ENCODE measurements at regions of chr9 and their contacts with region 1.

Region 1: GRCh38 chr9:35646533-35647265 is 4.0 kb downstream of the SIT1 start:
- DNase-seq: peak; percentile 61 to 88
- H3K4me3 ChIP-seq: peak overlapping the region; percentile 71
- H3K27ac ChIP-seq: peak overlapping the region; percentile 66
- H3K4me1 ChIP-seq: peaks cover 5% of the 10 kb centered on the region; the same call in 1 of the 2 replicates
- H3K27me3 ChIP-seq: no peaks in the 10 kb centered on the region
- CTCF ChIP-seq: peak; percentile 73

Region 2: DNA sequence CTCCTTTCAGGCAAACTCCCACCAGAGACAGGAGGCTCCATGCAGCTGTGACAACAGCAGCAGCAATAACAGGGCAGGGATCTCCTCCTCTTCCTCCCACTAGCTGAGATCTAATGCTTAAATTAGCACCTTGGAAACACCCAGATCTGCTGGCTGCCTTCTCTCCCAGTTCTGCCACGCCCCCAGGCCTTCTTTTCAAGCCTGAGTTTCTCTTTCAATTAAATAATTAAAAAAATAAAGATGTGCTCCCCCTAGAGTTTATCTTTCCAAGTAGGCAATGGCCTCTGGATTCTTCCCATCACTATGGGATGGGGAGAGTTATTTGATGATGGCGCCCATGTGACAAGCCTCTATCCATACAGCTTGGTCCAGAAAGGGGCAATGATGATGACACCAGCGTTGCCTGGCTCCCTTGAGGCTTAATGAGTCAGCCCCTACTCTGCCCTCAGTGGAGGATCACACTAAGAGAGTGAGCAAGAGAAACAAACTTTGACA is 1192.1 kb before region 1 on chr9:
- CTCF ChIA-PET with region 1: no interaction called
- POLR2A ChIA-PET with region 1: interaction called, 11 read pairs
- intact Hi-C with region 1: no loop called
- DNase-seq: peak; percentile 31 to 46
- H3K4me3 ChIP-seq: no peak overlapping the region
- H3K27ac ChIP-seq: no peak overlapping the region
- H3K4me1 ChIP-seq: peaks cover 26% of the 10 kb centered on the region
- H3K27me3 ChIP-seq: no peaks in the 10 kb centered on the region
- CTCF ChIP-seq: peak; percentile 25; the same call in 1 of the 2 replicates

Region 3: GRCh38 chr9:35481347-35481975 is 165.2 kb before region 1 on chr9:
- CTCF ChIA-PET with region 1: no interaction called
- POLR2A ChIA-PET with region 1: no interaction called
- intact Hi-C with region 1: loop called (anchors 5 kb)
- DNase-seq: peak; percentile 50 to 57
- H3K4me3 ChIP-seq: no peak overlapping the region
- H3K27ac ChIP-seq: no peak overlapping the region
- H3K4me1 ChIP-seq: no peaks in the 10 kb centered on the region
- H3K27me3 ChIP-seq: no peaks in the 10 kb centered on the region
- CTCF ChIP-seq: peak; percentile 74

Region 4: DNA sequence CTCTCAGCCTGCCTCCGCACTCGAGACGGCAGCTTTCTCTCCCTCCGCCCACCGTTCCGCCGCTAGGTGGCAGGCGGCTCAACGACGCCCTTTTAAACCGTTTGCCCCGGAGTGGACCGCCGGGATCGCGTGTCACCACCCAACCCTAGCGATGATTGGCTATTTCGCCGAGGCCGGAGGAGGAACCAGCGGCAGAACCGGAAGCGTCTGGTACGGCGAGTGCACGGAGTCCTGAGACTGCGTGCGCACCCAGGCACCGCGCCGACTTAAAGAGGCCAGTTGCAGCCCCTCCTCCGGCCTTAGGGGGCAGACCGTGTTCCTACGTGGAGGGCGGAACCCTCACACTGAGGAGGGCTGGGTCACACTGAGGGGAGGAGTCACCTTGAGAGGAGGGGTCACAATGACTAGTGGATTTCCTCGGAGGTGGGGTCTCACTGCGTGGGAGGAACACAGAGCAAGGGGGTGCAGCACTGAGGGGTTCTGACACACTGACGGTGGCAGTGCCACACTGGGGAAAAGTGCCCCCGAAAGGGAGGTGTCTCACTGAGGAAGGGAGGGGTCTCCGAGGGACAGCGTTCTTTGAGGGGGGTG is 42.6 kb before region 1 on chr9:
- CTCF ChIA-PET with region 1: no interaction called
- POLR2A ChIA-PET with region 1: interaction called, 3 read pairs
- intact Hi-C with region 1: loop called (anchors 2 kb)
- DNase-seq: peak; percentile 94 to 97
- H3K4me3 ChIP-seq: peak overlapping the region; percentile 75
- H3K27ac ChIP-seq: peak overlapping the region; percentile 71
- H3K4me1 ChIP-seq: peaks cover 14% of the 10 kb centered on the region; the same call in 1 of the 2 replicates
- H3K27me3 ChIP-seq: no peaks in the 10 kb centered on the region
- CTCF ChIP-seq: peak; percentile 80

Region 5: DNA sequence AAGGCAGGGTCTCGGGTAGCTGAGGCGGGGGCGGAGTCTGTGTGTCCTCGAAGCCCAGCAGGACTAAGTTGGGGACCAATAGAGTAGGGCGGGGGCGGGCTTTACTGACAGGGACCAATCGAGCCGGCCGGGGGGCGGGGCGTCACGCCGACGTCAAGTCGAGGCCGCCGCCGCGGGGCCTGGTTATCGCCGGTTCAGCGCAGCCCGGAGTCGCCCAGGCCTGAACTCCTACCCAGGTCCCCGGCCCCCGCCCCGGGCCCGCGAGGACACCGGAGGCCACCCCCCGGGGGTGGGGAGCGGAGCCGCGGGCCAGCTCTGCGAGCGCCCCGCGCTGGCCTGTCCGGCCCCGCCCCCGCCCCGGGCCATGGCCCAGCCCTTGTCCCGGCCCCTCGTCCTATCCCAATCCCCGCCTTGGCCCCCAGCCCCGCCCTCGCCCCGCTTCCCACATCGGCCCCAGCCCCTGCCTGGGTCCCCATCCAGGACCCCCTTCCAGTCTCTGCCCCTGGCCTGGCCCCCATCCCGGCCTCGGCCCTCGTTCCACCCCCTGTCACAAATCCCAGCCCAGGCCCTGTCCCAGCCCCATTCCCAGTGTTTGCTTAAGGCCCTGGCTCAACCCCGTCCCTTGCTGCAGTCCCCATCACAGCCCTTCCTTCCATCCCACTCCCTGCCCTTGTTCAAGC is 182.5 kb after region 1 on chr9 and contains the start of gene TMEM8B:
- CTCF ChIA-PET with region 1: no interaction called
- POLR2A ChIA-PET with region 1: no interaction called
- intact Hi-C with region 1: loop called (anchors 5 kb)
- DNase-seq: peak; percentile 63 to 78
- H3K4me3 ChIP-seq: peak within 1 kb of the TSS; percentile 71; the same call in 1 of the 2 replicates
- H3K27ac ChIP-seq: no peak within 1 kb of the TSS
- H3K4me1 ChIP-seq: peaks cover 12% of the 10 kb centered on the region
- H3K27me3 ChIP-seq: no peaks in the 10 kb centered on the region
- CTCF ChIP-seq: no peak
- total RNA-seq, gene TMEM8B: 6.3 and 6.4 TPM in 2 replicates